ENCODE measurements at regions of chr7 and their contacts with region 1.

Region 1: DNA sequence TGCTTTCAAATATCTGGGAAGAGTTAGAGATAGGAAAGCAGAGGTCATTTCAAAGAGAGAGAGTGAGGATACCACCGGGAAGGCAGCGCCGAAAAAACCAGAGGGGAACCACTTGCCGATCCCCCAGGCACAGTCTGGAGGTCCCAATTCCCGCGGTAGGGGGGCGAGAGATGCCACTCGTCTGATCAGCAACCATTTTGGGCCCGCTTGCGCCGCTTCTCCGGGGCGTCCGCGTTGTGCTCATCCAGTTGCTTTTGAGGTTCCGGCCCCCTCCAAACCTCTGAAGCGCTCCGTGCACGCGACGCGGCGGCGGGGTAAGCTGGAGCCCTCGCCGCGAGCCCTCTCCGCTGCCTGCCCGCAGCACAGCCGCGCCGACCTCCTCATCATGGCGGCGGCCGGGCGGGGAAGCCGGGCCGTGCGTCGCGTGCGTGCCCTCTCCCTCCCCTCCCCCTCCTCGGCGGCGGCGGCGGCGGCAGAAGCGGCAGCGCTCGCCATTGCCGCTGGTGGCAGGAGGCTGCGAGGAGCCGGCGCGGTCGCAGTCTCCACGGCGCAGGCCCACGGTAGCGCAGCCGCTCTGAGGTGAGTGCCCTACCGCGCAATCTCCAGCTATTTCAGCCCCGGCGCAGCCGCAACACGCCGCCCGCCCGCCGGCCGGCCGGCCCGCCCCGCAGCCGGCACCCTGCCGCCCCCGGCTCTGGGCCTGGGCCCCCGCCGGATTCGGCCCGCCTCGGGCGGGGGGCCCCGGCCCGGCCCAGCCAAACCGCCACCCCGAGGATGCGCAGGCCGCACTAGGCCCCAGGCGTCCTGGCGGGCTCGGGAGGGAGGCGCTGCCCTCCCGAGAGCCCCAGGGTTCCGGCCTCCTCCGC is at the start of gene NRF1:
- DNase-seq: peak; percentile 82 to 97 (median 91)
- ATAC-seq: peak; percentile 87
- H3K4me3 ChIP-seq: peak within 1 kb of the TSS; percentile 87 to 91
- H3K4me3 Mint-ChIP-seq: peak within 1 kb of the TSS; percentile 97
- H3K27ac ChIP-seq: peak within 1 kb of the TSS; percentile 68 to 85
- H3K27ac Mint-ChIP-seq: peak within 1 kb of the TSS; percentile 96
- H3K4me1 ChIP-seq: peaks cover 40% of the 10 kb centered on the region
- H3K4me1 Mint-ChIP-seq: peaks cover 67% of the 10 kb centered on the region
- H3K27me3 ChIP-seq: no peaks in the 10 kb centered on the region
- H3K27me3 Mint-ChIP-seq: no peaks in the 10 kb centered on the region
- CTCF ChIP-seq: no peak
- total RNA-seq, gene NRF1: 31.9 to 34.9 TPM

Region 2: GRCh38 chr7:127651556-127652332 is 1959.7 kb before region 1 on chr7 and contains the start of gene SND1:
- CTCF ChIA-PET with region 1: no interaction called
- POLR2A ChIA-PET with region 1: no interaction called
- intact Hi-C with region 1: loop called in 1 of 2 experiments (anchors 5 kb)
- DNase-seq: peak; percentile 96 to 100 (median 98)
- ATAC-seq: peak; percentile 94
- H3K4me3 ChIP-seq: peak within 1 kb of the TSS; percentile 82 to 98
- H3K4me3 Mint-ChIP-seq: peak within 1 kb of the TSS; percentile 98
- H3K27ac ChIP-seq: peak within 1 kb of the TSS; percentile 92 to 98
- H3K27ac Mint-ChIP-seq: peak within 1 kb of the TSS; percentile 99
- H3K4me1 ChIP-seq: peaks cover 35% of the 10 kb centered on the region
- H3K4me1 Mint-ChIP-seq: peaks cover 50% of the 10 kb centered on the region
- H3K27me3 ChIP-seq: no peaks in the 10 kb centered on the region
- H3K27me3 Mint-ChIP-seq: no peaks in the 10 kb centered on the region
- CTCF ChIP-seq: no peak
- total RNA-seq, gene SND1: 87.7 to 101 TPM

Region 3: DNA sequence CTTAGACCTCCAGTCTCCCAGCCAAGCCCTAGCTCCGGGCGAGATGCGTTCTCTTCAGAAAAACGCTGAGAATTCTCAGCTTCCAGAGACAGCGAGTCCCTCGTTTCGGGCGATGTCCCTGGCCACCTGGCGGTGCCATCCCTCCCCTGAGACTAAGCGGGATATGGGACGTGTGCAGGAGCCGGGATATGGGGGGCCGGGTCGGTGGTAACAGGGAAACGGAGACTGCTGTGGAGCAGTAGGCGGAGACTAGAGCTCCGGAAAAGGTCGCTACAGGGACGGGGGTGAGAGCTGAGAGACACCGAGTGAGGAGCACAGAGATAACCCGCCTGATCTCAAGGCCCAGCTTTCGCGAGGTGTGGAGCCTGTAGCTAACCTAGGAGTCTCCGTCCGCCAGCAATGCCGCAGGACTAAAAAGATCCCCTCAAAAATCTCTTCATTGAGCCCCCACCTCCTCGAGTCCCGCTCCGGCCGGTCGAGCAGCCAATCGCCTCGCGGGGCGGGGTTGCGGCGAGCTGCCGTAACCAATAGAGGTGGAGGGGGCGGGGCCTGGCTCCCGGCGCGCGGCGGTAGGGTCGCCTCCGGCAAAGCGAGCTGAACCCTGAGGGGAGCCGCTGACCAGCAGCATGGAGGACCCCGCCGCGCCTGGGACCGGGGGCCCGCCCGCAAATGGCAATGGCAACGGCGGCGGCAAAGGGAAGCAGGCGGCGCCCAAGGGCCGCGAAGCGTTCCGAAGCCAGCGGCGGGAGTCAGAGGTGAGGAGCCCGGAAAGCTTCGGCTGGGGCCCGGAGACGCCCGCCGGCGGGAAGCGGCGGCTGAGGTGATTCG is 177.4 kb before region 1 on chr7 and contains the start of gene STRIP2:
- CTCF ChIA-PET with region 1: no interaction called
- POLR2A ChIA-PET with region 1: interaction called, 3 read pairs
- intact Hi-C with region 1: loop called (anchors 2 kb)
- DNase-seq: peak; percentile 73 to 92 (median 90)
- ATAC-seq: peak; percentile 95
- H3K4me3 ChIP-seq: peak within 1 kb of the TSS; percentile 91 to 93
- H3K4me3 Mint-ChIP-seq: peak within 1 kb of the TSS; percentile 94
- H3K27ac ChIP-seq: no peak within 1 kb of the TSS
- H3K27ac Mint-ChIP-seq: peak within 1 kb of the TSS; percentile 46
- H3K4me1 ChIP-seq: peaks cover 12% of the 10 kb centered on the region
- H3K4me1 Mint-ChIP-seq: peaks cover 20% of the 10 kb centered on the region
- H3K27me3 ChIP-seq: peaks cover 0 to 8% of the 10 kb centered on the region in 2 experiments
- H3K27me3 Mint-ChIP-seq: peaks cover 29% of the 10 kb centered on the region
- CTCF ChIP-seq: no peak
- total RNA-seq, gene STRIP2: 0.19 TPM in 1 of 2 experiments, not detected in the other

Region 4: DNA sequence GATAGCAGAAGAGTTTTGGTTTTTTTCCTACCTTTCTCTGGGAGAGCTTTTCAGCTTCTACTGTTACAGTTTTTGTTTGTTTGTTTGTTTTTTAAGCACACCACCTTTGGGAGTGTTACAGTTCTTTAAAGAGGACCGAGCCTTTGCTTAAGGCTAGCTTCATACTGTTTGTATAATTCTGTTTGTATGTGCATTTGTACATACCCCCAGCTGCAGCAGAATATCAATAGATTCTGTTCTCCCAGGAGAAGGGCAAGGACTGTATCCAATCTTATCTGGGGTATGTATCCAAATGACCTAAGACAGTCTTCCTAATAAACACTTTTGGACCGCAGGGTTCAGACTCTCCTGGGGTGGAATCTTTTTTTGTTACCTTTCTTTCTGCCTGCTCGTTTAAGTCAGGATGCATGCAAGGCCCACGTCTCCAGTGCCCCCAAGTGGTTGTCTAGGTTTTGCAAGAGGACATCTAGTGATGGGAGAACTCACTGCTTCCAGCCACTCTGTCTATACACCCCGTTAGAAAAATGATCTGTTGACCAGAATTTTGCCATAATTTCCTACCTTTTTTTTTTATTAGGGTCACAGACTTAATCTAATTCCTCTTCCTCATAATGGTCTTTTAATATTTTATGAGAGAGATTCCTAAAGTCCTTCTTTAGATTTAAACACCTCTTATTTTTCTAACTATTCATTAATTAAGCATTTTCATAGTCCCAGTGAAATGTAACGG is 24.0 kb after region 1 on chr7:
- CTCF ChIA-PET with region 1: interaction called, 17 read pairs
- POLR2A ChIA-PET with region 1: interaction called, 6 read pairs
- intact Hi-C with region 1: loop called (anchors 1 kb)
- DNase-seq: peak; percentile 41 to 82 (median 70)
- ATAC-seq: peak; percentile 98
- H3K4me3 ChIP-seq: no peak overlapping the region
- H3K4me3 Mint-ChIP-seq: no peak overlapping the region
- H3K27ac ChIP-seq: no peak overlapping the region
- H3K27ac Mint-ChIP-seq: peak overlapping the region; percentile 8
- H3K4me1 ChIP-seq: peaks cover 10% of the 10 kb centered on the region
- H3K4me1 Mint-ChIP-seq: peaks cover 56% of the 10 kb centered on the region
- H3K27me3 ChIP-seq: no peaks in the 10 kb centered on the region
- H3K27me3 Mint-ChIP-seq: no peaks in the 10 kb centered on the region
- CTCF ChIP-seq: peak; percentile 79

Region 5: DNA sequence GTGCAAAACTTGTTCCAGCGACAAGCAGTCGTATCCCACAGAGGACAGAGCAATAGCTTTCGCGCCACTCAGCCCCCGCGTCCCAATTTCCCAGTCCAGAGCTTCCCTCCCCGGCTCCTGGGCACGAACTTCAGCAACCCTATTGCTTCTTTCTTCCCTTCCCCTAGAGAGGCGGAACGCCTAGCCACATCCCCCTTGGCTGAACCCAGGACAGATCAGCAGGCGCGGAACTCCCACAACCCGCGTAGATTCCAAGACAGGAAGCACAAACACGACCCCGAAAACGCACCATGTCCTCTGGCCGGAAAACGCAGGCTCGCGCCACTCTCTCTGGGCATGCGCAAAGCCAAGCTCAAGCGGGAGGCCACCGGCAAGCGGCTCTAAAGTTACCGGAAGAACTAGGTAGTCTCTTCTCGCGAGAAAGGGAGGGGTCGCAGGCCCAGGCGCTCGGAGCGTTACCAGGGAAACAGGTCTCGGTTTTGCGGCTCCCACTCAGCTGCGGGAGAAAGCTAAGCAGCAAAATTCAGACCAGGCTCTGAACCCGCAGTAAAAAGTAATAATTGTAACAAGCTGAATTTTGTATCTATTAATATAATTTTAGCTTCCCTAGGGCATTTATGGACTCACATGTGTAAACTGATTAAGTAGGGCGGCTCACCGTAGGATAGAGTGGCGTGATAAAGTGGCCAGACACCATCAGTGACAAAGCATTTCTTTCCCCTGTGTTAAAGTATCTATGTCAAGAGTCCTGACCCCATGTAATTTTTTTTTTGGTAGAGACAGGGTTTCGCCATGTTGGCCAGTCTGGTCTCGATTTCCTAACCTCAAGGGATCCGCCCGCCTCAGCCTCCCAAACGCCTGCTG is 593.8 kb after region 1 on chr7 and contains the start of gene TMEM209:
- CTCF ChIA-PET with region 1: no interaction called
- POLR2A ChIA-PET with region 1: no interaction called
- intact Hi-C with region 1: loop called (anchors 10 kb)
- DNase-seq: peak; percentile 85 to 97 (median 93)
- ATAC-seq: peak; percentile 96
- H3K4me3 ChIP-seq: peak within 1 kb of the TSS; percentile 95 to 99
- H3K4me3 Mint-ChIP-seq: peak within 1 kb of the TSS; percentile 100
- H3K27ac ChIP-seq: peak within 1 kb of the TSS; percentile 80 to 92
- H3K27ac Mint-ChIP-seq: peak within 1 kb of the TSS; percentile 100
- H3K4me1 ChIP-seq: peaks cover 5% of the 10 kb centered on the region
- H3K4me1 Mint-ChIP-seq: peaks cover 34% of the 10 kb centered on the region
- H3K27me3 ChIP-seq: no peaks in the 10 kb centered on the region
- H3K27me3 Mint-ChIP-seq: no peaks in the 10 kb centered on the region
- CTCF ChIP-seq: no peak
- total RNA-seq, gene TMEM209: 15.7 to 15.9 TPM